Endothelial cell of umbilical vein (primary cell): ENCODE measurements at regions of chr17 and their contacts with region 1.

Region 1: DNA sequence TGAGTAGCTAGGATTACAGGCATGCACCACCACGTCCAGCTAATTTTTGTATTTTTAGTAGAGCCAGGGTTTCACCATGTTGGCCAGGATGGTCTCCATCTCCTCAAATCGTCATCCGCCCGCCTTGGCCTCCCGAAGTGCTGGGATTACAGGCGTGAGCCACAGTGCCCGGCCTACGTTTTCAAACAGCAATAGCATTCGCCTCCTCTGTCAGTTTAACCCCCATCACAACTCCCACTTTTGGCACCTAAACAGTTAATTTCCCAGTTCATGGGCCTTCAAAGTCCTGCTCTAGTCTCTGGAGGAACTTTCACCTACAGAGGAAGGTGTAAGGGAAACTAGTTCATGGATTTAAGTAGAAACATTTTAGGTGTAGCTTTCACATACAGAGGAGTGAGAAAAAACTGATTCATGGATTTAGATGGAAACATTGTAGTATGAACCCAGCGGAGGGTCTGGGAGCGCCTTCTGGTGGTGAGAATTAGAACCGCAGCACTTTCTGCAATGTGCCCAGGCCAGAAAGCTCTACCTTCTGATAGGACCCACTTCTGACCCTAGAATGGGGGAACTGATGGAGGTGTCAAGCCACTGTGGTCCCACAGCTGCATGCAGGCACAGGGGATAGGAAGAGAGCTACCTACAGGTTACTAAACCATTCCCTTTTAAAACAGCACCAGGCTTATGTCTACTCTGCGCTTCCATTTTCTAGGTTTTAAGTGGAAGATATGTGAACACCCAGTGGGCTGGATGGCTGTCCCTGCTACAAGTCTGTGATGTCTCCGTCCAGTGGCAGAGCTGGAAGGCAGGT is 12.0 kb upstream of the MEOX1 start:
- DNase-seq: peak; percentile 79
- H3K4me3 ChIP-seq: no peak overlapping the region
- H3K27ac ChIP-seq: no peak overlapping the region
- H3K4me1 ChIP-seq: no peaks in the 10 kb centered on the region
- H3K27me3 ChIP-seq: no peaks in the 10 kb centered on the region
- CTCF ChIP-seq: peak; percentile 89 to 97
- POLR2A ChIP-seq: no peak

Region 2: DNA sequence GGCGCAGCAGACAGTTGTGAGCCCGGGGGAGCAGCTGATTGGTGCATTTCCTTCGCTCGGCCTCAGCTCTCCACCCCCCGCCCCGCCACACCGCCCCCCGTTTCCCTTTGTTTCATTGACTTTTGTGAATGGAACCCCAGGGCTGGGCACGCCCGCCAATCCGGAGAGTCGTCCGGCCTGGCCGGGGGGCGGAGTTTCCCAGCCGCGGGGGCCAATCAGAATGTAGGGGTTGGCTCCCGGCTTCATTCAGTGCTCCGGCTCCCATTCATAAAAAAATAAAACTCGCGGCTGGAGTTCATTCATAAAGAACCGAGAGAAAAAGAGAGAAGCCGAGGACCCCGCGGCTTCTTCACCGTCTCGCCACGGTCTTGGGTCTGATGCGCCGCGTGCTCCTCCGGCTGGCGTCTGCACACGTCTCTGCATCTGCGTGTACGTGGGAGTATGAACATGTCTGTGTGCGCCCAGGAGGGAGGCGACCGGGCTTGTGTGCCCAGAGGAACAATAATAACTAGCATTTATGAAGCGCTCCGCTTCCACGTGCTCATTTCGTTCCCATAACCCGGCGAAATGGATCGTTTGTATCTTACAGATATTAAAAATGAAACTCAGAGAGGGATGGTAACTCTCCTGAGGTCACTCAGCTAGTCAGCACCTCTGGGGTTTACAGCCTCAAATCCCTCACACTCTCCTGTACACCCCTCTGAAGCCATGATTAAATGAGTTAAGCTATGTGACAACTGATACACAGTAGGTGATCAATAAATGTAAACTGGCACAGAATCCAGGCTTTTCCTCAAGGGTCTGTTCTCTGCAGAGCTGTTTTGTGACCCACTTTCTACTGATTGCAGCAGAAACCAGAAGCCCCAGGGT is 127.2 kb before region 1 on chr17 and contains the start of gene ETV4:
- CTCF ChIA-PET with region 1: interaction called, 11 read pairs
- POLR2A ChIA-PET with region 1: no interaction called
- dilution Hi-C with region 1: no loop called
- intact Hi-C with region 1: no loop called
- DNase-seq: peak; percentile 95
- H3K4me3 ChIP-seq: peak within 1 kb of the TSS; percentile 28 to 75 (median 56)
- H3K27ac ChIP-seq: peak within 1 kb of the TSS; percentile 90
- H3K4me1 ChIP-seq: peaks cover 23% of the 10 kb centered on the region
- H3K27me3 ChIP-seq: no peaks in the 10 kb centered on the region
- CTCF ChIP-seq: no peak
- POLR2A ChIP-seq: no peak
- total RNA-seq, gene ETV4: 32.2 and 39.4 TPM in 2 replicates

Region 3: GRCh38 chr17:43570518-43570928 is 103.2 kb before region 1 on chr17:
- CTCF ChIA-PET with region 1: interaction called, 595 read pairs
- POLR2A ChIA-PET with region 1: no interaction called
- dilution Hi-C with region 1: no loop called
- intact Hi-C with region 1: no loop called
- DNase-seq: no peak
- H3K4me3 ChIP-seq: no peak overlapping the region
- H3K27ac ChIP-seq: no peak overlapping the region
- H3K4me1 ChIP-seq: no peaks in the 10 kb centered on the region
- H3K27me3 ChIP-seq: no peaks in the 10 kb centered on the region
- CTCF ChIP-seq: no peak
- POLR2A ChIP-seq: no peak

Region 4: DNA sequence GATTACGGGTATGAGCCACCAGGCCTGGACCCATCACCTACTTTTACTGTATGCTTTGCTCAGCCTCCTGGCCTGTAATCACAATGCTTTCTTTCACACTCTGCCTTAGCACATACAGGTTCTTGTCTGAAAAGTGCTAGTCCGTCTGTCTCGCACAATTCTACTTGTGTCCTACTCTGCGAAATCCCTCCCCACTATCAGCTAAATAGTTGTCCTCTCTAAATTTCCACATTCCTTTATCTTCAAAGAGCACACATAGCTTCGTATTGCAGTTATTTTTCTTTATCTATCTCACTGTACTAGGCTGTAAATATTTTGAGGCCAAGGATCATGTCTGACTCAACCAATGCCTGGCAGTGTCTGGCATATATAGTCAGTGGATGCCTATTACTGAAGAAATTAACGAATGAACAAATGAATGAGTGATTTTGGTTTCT is 89.0 kb before region 1 on chr17:
- CTCF ChIA-PET with region 1: interaction called, 595 read pairs
- POLR2A ChIA-PET with region 1: no interaction called
- dilution Hi-C with region 1: no loop called
- intact Hi-C with region 1: no loop called
- DNase-seq: peak; percentile 41
- H3K4me3 ChIP-seq: no peak overlapping the region
- H3K27ac ChIP-seq: no peak overlapping the region
- H3K4me1 ChIP-seq: peaks cover 3% of the 10 kb centered on the region
- H3K27me3 ChIP-seq: no peaks in the 10 kb centered on the region
- CTCF ChIP-seq: no peak
- POLR2A ChIP-seq: no peak

Region 5: GRCh38 chr17:43609613-43610385 is 63.9 kb before region 1 on chr17:
- CTCF ChIA-PET with region 1: interaction called, 13 read pairs
- POLR2A ChIA-PET with region 1: no interaction called
- dilution Hi-C with region 1: no loop called
- intact Hi-C with region 1: no loop called
- DNase-seq: peak; percentile 87
- H3K4me3 ChIP-seq: no peak overlapping the region
- H3K27ac ChIP-seq: peak overlapping the region; percentile 10
- H3K4me1 ChIP-seq: peaks cover 11% of the 10 kb centered on the region
- H3K27me3 ChIP-seq: peaks cover 0 to 3% of the 10 kb centered on the region in 2 experiments
- CTCF ChIP-seq: no peak
- POLR2A ChIP-seq: peak; percentile 23

Region 6: GRCh38 chr17:43645765-43646481 is 27.8 kb before region 1 on chr17:
- CTCF ChIA-PET with region 1: interaction called, 25 read pairs
- POLR2A ChIA-PET with region 1: no interaction called
- dilution Hi-C with region 1: no loop called
- intact Hi-C with region 1: no loop called
- DNase-seq: peak; percentile 61
- H3K4me3 ChIP-seq: peak overlapping the region; percentile 35 to 45 (median 43)
- H3K27ac ChIP-seq: peak overlapping the region; percentile 39
- H3K4me1 ChIP-seq: peaks cover 9% of the 10 kb centered on the region
- H3K27me3 ChIP-seq: no peaks in the 10 kb centered on the region
- CTCF ChIP-seq: peak; percentile 11 to 22
- POLR2A ChIP-seq: no peak

Region 7: GRCh38 chr17:43683928-43684653 is 10.4 kb after region 1 on chr17:
- CTCF ChIA-PET with region 1: interaction called, 15 read pairs
- POLR2A ChIA-PET with region 1: no interaction called
- dilution Hi-C with region 1: no loop called
- intact Hi-C with region 1: no loop called
- DNase-seq: no peak
- H3K4me3 ChIP-seq: no peak overlapping the region
- H3K27ac ChIP-seq: no peak overlapping the region
- H3K4me1 ChIP-seq: no peaks in the 10 kb centered on the region
- H3K27me3 ChIP-seq: no peaks in the 10 kb centered on the region
- CTCF ChIP-seq: no peak
- POLR2A ChIP-seq: no peak

Region 8: GRCh38 chr17:43958953-43959352 is 285.2 kb after region 1 on chr17:
- CTCF ChIA-PET with region 1: no interaction called
- POLR2A ChIA-PET with region 1: no interaction called
- dilution Hi-C with region 1: no loop called
- intact Hi-C with region 1: no loop called
- DNase-seq: no peak
- H3K4me3 ChIP-seq: no peak overlapping the region
- H3K27ac ChIP-seq: no peak overlapping the region
- H3K4me1 ChIP-seq: no peaks in the 10 kb centered on the region
- H3K27me3 ChIP-seq: peaks cover 10 to 14% of the 10 kb centered on the region in 2 experiments
- CTCF ChIP-seq: no peak
- POLR2A ChIP-seq: no peak

Region 9: GRCh38 chr17:44014437-44015172 is 340.9 kb after region 1 on chr17 and contains the start of gene TMEM101:
- CTCF ChIA-PET with region 1: no interaction called
- POLR2A ChIA-PET with region 1: no interaction called
- dilution Hi-C with region 1: no loop called
- intact Hi-C with region 1: no loop called
- DNase-seq: peak; percentile 83
- H3K4me3 ChIP-seq: peak within 1 kb of the TSS; percentile 29 to 68 (median 67)
- H3K27ac ChIP-seq: no peak within 1 kb of the TSS
- H3K4me1 ChIP-seq: peaks cover 5% of the 10 kb centered on the region
- H3K27me3 ChIP-seq: no peaks in the 10 kb centered on the region
- CTCF ChIP-seq: no peak
- POLR2A ChIP-seq: peak; percentile 85
- total RNA-seq, gene TMEM101: 29.4 and 30.4 TPM in 2 replicates